H1 (cell line): ENCODE measurements at regions of chr7 and their contacts with region 1.

Region 1: DNA sequence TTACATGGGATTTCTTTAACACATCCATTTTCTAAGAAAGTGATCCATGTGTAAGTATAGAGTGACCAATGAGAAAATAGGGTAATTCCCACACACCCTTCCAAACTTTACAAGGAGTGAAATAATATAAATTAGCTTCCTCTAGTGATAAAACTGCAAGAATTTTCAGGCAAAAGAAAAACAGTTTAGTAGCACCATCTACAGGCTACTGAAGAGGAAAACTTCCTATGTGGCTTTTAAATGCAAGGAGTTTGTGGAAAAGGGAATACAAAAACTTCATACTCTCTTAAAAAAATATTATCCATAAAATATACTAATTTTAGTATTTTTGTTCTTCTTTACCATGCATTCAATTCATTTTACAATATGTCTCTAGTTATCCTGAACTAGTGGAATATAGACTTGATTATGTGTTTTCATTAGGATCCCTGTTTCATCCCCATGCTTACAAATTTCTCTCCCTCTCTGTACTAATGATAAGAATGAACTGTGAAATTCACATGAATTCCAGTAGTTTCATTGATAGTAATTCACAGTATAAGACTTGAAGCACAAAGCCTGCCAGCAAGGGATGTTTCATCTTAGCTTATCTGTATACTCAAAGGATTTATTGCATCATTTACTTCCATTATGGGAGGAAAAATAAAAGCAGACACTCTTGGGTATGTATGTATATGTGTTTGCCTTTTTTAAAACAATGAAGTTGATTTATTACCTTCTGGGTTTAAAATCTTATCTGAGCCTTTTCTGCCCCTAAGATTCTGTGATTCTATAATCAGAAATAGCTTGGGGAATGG is 442.9 kb downstream of the AUTS2 start:
- DNase-seq: no peak
- H3K4me3 ChIP-seq: no peak overlapping the region
- H3K27ac ChIP-seq: no peak overlapping the region
- H3K4me1 ChIP-seq: peaks cover 0 to 4% (median 2%) of the 10 kb centered on the region in 4 experiments; a peak in 2 of 7 replicates
- H3K27me3 ChIP-seq: no peaks in the 10 kb centered on the region
- CTCF ChIP-seq: peak in 1 of 3 experiments; percentile 33; a peak in 2 of 4 replicates
- EP300 ChIP-seq: no peak
- POLR2A ChIP-seq: no peak
- RAD21 ChIP-seq: peak; percentile 62 to 66

Region 2: DNA sequence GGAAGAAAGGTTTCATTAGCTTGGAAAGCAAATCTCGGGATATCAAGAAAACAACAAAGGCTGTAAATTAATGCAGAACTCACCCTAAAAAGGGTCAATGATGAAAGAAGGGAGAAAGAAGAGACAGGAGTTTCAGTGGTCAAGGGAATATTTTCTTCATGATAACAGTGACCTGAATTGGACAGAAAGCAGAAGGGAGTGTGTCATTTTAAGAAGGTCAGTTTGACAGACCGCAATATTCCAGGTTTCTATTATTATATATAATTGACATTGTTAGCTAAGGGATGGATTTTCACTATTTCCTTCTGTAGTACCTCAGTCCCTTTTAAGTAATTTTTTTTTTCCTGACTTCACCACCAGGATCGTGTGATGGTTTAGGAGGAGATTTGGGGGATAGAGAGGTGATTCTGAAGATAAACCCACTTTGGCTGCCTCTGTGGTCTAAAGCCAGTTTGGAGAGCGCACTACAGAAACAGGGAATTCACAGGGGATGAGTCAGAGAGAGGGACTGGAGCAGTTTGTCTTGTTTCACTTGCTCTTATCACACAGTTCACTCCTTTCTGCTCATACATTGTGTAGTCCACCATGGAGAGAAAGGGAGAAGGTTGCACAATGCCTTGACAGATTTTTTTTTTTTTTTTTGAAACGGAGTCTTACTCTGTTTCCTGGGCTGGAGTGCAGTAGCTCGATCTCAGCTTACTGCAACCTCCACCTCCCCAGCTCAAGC is 25.0 kb before region 1 on chr7:
- CTCF ChIA-PET with region 1: interaction called, 15 read pairs
- POLR2A ChIA-PET with region 1: no interaction called
- DNase-seq: no peak
- H3K4me3 ChIP-seq: no peak overlapping the region
- H3K27ac ChIP-seq: no peak overlapping the region
- H3K4me1 ChIP-seq: peaks cover 0 to 12% (median 4%) of the 10 kb centered on the region in 4 experiments; a peak in 4 of 7 replicates
- H3K27me3 ChIP-seq: no peaks in the 10 kb centered on the region
- CTCF ChIP-seq: no peak
- EP300 ChIP-seq: no peak
- POLR2A ChIP-seq: no peak
- RAD21 ChIP-seq: no peak

Region 3: GRCh38 chr7:70156057-70156456 is 114.9 kb after region 1 on chr7:
- CTCF ChIA-PET with region 1: interaction called, 17 read pairs
- POLR2A ChIA-PET with region 1: no interaction called
- DNase-seq: no peak
- H3K4me3 ChIP-seq: no peak overlapping the region
- H3K27ac ChIP-seq: no peak overlapping the region
- H3K4me1 ChIP-seq: peaks cover 0 to 9% (median 1%) of the 10 kb centered on the region in 4 experiments; a peak in 3 of 7 replicates
- H3K27me3 ChIP-seq: no peaks in the 10 kb centered on the region
- CTCF ChIP-seq: no peak
- EP300 ChIP-seq: no peak
- POLR2A ChIP-seq: no peak
- RAD21 ChIP-seq: no peak